GM18951 (cell line): ENCODE measurements at regions of chr12 and their contacts with region 1.

Region 1: GRCh38 chr12:64551698-64552097 is 58.6 kb upstream of the RASSF3 start:
- POLR2A ChIP-seq: no peak

Region 2: DNA sequence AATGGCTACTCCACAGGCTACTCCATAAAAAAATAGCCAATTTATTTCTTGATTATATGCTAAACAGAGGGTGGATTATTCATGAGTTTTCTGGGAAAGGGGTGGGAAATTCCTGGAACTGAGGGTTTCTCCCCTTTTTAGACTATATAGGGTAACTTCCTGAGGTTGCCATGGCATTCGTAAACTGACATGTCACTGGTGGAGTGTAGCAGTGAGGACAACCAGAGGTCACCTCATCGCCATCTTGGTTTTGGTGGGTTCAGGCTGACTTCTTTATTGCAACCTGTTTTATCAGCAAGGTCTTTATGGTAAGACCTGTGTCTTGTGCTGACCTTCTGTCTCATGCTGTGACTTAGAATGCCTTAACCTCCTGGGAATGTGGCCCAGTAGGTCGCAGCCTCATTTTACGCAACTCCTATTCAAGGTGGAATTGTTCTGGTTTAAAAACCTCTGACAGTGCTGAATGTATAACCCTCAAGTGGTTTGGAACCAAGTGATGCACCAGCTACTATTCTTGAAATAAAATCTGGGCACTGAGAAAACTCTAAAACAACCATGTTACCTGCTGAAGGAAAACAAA is 188.9 kb before region 1 on chr12:
- in situ Hi-C with region 1: no loop called
- POLR2A ChIP-seq: no peak

Region 3: DNA sequence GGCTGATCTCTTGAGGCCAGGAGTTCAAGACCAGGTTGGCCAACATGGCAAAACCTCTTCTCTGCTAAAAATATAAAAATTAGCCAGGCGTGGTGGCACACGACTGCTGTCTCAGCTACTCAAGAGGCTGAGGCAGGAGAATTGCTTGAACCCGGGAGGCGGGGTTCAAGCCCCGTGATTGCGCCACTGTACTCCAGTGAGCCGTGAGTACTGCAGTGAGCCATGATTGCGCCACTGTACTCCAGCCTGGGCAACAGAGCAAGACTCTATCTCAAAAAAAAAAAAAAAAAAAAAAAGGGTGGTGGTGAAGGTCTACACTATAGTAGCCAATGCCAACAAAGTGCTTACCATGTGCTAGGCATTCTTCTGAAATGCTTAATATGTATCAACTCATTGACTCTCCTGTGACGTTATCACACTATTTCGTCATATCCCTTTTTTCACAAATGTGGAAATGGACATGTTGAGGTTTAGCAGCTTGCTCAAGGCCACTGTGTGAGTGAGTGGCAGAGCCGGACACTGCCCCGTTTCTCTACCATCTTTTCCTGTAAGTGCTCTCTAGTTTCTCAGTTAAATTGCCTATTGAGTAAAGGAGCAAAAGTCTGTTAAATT is 147.9 kb after region 1 on chr12:
- in situ Hi-C with region 1: loop called (anchors 10 kb)
- POLR2A ChIP-seq: no peak